ENCODE measurements at regions of chr11 and their contacts with region 1.

Region 1: GRCh38 chr11:68297812-68298658 is 14.4 kb upstream of the LRP5 start:
- DNase-seq: peak in 1 of 2 donors; percentile 86
- H3K4me3 ChIP-seq: peak overlapping the region in 1 of 2 donors; percentile 12
- H3K27ac ChIP-seq: no peak overlapping the region
- H3K4me1 ChIP-seq: peaks cover 0 to 7% of the 10 kb centered on the region in 2 donors
- H3K27me3 ChIP-seq: no peaks in the 10 kb centered on the region
- CTCF ChIP-seq: peak; percentile 96 to 100 (median 99)

Region 2: DNA sequence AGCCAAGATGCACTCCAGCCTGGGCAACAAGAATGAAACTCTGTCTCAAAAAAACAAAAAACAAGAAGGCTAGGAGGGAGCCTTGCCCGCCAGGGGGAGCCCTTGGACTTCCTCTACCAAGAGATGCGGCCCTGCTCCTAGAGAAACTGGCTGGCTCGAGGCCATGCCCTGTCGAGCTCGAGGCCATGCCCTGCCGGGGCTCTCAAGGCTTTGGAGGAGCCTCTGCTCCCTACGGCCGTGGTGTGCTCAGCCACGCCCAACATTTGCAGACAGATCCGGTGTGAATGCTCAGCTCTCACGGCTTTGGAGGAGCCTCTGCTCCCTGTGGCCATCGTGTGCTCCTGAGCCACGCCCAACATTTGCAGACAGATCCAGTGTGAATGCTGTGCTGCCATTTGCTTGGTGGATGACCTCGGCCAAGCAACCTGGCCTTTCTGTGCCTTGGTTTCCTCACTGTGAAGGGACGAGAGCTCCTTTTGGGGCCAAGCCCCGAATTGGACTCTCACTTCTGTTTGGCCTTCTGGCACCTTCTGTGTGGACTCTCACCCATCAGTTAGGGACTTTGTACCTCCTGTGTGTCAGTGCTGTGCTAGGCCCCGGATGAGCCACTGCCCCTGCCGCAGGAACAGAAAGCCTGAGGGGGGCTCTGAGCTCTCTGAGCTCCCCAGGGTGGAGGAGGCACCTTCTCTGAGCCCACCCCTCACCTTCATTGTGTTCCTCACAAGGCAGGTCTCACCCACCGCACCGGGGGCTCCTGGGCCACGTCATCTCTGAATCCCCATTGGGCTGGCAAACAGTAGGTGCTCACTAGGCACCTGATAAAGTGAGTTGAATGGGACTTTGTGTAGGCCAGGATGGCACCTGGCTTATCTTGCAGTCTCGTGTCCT is 40.3 kb before region 1 on chr11:
- intact Hi-C with region 1: loop called (anchors 1 kb)
- DNase-seq: peak; percentile 75 to 98
- H3K4me3 ChIP-seq: peak overlapping the region in 1 of 2 donors; percentile 51
- H3K27ac ChIP-seq: peak overlapping the region; percentile 10 to 37
- H3K4me1 ChIP-seq: peaks cover 0 to 3% of the 10 kb centered on the region in 2 donors
- H3K27me3 ChIP-seq: no peaks in the 10 kb centered on the region
- CTCF ChIP-seq: peak; percentile 75 to 94 (median 90)

Region 3: DNA sequence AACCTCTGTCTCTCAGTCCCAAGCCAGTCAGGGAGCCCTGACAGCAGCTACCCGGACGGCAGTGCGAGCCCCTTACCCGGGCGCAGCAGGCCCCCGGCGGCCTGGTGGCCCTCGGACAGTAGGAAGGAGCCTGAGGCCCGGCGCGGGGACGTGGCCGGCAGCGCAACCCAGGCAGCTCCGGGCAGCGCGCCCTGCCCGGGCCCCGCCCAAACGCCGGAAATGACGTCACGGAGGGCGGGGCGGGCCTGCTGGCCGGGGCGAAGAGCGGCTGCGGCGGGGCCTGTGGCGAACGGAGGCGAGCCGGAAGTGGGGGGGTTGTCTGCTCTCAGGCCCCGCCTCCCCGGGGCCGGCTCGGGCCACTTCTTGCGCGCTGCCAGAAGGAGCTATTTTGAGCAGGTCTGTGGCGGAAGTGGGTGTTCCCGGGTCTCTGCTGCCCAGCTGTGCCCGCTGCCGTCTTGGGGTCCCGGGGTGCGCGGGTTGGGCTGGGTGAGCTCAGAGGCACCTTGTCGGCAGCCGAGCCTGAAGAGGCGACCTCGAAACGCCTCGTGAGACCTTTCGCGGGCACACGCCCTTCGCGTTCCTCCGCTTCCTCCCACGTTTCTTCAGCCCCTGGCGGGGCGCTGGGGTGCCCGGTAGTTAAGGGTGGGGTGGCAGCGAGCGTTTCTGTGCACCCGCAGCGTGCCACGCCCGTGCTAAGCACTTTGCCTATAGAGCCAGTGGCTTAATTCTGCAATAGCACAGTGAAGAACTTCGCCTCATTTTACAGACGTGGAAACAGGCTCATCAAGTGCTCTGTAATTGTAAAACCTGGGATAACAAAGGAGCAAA is 26.0 kb before region 1 on chr11 and contains the start of gene C11orf24:
- intact Hi-C with region 1: loop called (anchors 1 kb)
- DNase-seq: peak; percentile 80 to 96
- H3K4me3 ChIP-seq: peak within 1 kb of the TSS; percentile 78 to 82
- H3K27ac ChIP-seq: peak within 1 kb of the TSS; percentile 91 to 94
- H3K4me1 ChIP-seq: peaks cover 8 to 19% of the 10 kb centered on the region in 2 donors
- H3K27me3 ChIP-seq: no peaks in the 10 kb centered on the region
- CTCF ChIP-seq: no peak
- total RNA-seq, gene C11orf24: 123 TPM

Region 4: DNA sequence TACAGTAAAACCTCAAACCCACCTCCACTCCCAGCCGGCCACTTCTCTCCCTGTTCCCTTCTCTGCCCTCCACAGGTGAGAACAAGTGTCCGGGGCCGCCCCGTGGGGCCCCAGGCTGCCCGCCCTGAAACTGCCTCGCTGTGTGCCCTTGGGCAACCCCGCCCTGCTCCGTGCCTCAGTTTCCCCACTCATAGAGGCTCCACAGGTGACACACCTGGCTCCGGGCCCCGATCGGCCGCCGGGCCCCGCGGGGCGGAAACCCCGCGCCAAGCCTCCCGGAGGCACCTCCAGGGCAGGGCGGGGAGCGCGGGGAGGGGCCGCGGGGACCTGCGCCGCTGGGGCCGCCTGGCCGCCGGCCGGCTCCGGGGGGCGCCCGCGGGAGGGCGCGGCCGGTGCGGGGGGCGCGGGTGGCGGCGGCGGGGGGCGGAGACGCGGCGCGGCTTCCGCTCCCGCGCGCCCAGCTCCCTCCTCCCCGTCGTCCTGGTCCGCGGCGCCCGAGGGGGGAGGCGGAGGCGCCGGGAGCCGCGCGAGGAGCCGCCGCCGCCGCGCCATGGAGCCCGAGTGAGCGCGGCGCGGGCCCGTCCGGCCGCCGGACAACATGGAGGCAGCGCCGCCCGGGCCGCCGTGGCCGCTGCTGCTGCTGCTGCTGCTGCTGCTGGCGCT is 14.2 kb after region 1 on chr11 and contains the start of gene LRP5:
- intact Hi-C with region 1: no loop called
- DNase-seq: no peak
- H3K4me3 ChIP-seq: peak within 1 kb of the TSS; percentile 86 to 97
- H3K27ac ChIP-seq: peak within 1 kb of the TSS; percentile 82 to 84
- H3K4me1 ChIP-seq: peaks cover 21 to 30% of the 10 kb centered on the region in 2 donors
- H3K27me3 ChIP-seq: no peaks in the 10 kb centered on the region
- CTCF ChIP-seq: no peak
- total RNA-seq, gene LRP5: 130 TPM

Measured in ascending aorta (tissue), 2 donors.